ENCODE measurements at regions of chr11 and their contacts with region 1.

Region 1: GRCh38 chr11:100575870-100576705 is 111.0 kb upstream of the ARHGAP42 start:
- DNase-seq: no peak
- ATAC-seq: peak; percentile 72
- H3K4me3 Mint-ChIP-seq: no peak overlapping the region
- H3K27ac Mint-ChIP-seq: no peak overlapping the region
- H3K4me1 Mint-ChIP-seq: no peaks in the 10 kb centered on the region
- H3K27me3 Mint-ChIP-seq: peaks cover 2% of the 10 kb centered on the region
- CTCF ChIP-seq: no peak

Region 2: GRCh38 chr11:100536979-100537378 is 39.1 kb before region 1 on chr11:
- CTCF ChIA-PET with region 1: no interaction called
- POLR2A ChIA-PET with region 1: no interaction called
- intact Hi-C with region 1: no loop called
- DNase-seq: no peak
- ATAC-seq: no peak
- H3K4me3 Mint-ChIP-seq: no peak overlapping the region
- H3K27ac Mint-ChIP-seq: no peak overlapping the region
- H3K4me1 Mint-ChIP-seq: no peaks in the 10 kb centered on the region
- H3K27me3 Mint-ChIP-seq: no peaks in the 10 kb centered on the region
- CTCF ChIP-seq: no peak

Region 3: DNA sequence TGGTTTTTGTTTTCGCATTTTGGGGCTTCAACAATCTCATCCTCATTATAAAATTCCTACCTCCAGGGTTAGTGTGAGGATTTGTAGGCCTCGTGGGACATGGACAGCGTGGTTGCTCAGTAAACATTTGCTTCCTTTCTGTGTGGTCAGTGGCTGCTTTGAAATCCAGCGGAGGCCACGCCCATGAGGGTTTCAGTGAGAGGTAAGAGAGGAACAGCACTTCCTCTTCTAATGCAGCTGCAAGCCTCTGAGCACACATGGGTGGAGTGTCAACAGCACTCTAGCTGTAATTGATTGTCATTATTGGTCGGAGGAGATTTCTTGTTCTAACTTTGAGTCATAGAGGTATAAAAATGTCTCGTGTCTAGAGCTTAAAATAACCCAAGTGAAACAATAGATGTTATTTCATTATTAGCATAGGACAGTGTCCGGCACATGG is 105.0 kb after region 1 on chr11:
- CTCF ChIA-PET with region 1: interaction called, 5 read pairs
- POLR2A ChIA-PET with region 1: no interaction called
- intact Hi-C with region 1: loop called (anchors 1 kb)
- DNase-seq: peak; percentile 58
- ATAC-seq: peak; percentile 98
- H3K4me3 Mint-ChIP-seq: peak overlapping the region; percentile 35
- H3K27ac Mint-ChIP-seq: peak overlapping the region; percentile 79
- H3K4me1 Mint-ChIP-seq: peaks cover 57% of the 10 kb centered on the region
- H3K27me3 Mint-ChIP-seq: no peaks in the 10 kb centered on the region
- CTCF ChIP-seq: no peak

Region 4: DNA sequence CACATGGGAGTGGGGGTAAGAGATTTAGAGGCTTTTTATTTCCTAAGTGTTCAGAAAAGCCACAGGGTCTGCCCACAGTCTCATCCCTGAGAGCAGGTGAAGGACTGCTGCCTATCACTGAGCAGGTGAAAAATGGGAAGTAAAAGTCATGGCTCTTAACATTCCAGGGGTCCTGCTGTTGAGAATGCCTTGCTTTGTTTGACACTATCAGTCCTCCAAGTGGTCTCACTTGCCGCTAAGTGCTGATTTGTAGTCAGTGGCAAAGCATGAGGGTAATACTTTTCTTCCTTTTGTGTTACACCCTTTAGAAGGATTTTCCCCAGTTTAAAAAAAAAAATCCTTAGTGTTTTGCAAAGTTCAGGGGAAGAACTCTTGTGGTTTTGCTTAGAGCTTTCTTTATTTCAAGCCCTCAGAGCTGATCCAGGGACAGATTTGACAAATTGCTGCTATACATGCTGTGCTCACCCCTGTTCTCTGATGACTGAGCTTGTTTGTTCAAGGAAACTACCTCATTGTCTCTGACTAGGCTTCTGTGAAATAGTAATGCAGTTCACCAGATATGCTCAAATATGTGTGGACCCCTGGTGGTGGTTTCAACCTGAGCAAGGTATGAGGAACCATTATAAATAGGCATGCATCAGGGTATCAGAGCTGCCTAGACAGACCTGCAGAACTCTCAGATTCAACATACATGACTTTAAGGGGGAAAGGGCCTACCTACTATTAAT is 252.0 kb after region 1 on chr11:
- CTCF ChIA-PET with region 1: interaction called, 13 read pairs
- POLR2A ChIA-PET with region 1: no interaction called
- intact Hi-C with region 1: loop called (anchors 1 kb)
- DNase-seq: no peak
- ATAC-seq: peak; percentile 70
- H3K4me3 Mint-ChIP-seq: no peak overlapping the region
- H3K27ac Mint-ChIP-seq: no peak overlapping the region
- H3K4me1 Mint-ChIP-seq: peaks cover 2% of the 10 kb centered on the region
- H3K27me3 Mint-ChIP-seq: no peaks in the 10 kb centered on the region
- CTCF ChIP-seq: no peak

Region 5: DNA sequence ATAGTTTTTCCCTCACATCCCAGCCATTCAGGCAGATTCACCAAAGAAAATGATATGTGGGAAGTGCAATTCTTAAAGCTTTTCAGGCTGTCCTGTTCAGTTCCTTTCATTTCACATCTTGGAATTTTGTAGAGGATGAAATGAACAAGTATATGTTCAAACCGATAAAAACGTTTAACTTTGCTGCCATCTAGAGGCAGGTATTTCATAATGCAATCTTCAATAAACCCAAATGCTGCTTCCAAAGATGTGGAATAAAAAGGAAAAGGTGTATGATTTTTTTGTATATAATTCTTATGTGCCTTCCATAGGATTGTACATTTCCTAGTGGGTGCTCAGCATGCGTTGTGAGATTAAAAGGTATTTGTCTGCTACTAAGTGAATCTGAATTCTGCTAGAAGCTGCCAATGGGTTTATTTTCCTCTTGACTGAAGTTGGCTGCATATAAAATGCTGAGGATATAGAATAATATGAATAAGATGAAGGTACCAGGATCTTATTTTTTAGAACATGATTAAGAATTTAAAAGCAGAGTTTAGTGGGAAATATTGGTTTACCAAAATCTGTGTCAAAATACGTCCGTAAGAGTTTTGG is 354.2 kb after region 1 on chr11:
- CTCF ChIA-PET with region 1: interaction called, 23 read pairs
- POLR2A ChIA-PET with region 1: no interaction called
- intact Hi-C with region 1: loop called (anchors 1 kb)
- DNase-seq: no peak
- ATAC-seq: no peak
- H3K4me3 Mint-ChIP-seq: no peak overlapping the region
- H3K27ac Mint-ChIP-seq: no peak overlapping the region
- H3K4me1 Mint-ChIP-seq: peaks cover 10% of the 10 kb centered on the region
- H3K27me3 Mint-ChIP-seq: no peaks in the 10 kb centered on the region
- CTCF ChIP-seq: no peak

Region 6: DNA sequence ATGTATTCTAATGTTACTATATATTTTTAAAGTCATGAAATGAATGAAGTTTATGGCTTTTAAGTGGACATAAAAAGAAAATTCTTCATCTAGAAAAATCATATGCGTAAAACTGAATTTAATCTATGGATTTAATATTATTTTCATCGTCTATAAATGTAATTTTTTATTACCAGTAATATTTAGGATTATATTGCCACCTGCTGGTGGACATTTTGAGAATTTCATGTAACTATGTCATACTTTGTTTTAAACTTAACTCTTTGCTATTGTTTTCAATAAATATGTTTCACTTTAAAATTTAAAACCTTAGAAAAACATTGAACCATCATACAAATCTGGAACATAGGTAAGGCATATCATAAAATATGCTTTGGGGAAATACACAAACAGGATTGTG is 1272.2 kb after region 1 on chr11:
- CTCF ChIA-PET with region 1: no interaction called
- POLR2A ChIA-PET with region 1: no interaction called
- intact Hi-C with region 1: loop called (anchors 2 kb)
- DNase-seq: no peak
- ATAC-seq: no peak
- H3K4me3 Mint-ChIP-seq: no peak overlapping the region
- H3K27ac Mint-ChIP-seq: no peak overlapping the region
- H3K4me1 Mint-ChIP-seq: no peaks in the 10 kb centered on the region
- H3K27me3 Mint-ChIP-seq: peaks cover 4% of the 10 kb centered on the region
- CTCF ChIP-seq: no peak

Measured in activated B cell treated with CpG ODN at 0.5 μM for 24 hours (primary cell).